Testis (tissue), 5 donors: ENCODE measurements at regions of chr5 and their contacts with region 1.

Region 1: DNA sequence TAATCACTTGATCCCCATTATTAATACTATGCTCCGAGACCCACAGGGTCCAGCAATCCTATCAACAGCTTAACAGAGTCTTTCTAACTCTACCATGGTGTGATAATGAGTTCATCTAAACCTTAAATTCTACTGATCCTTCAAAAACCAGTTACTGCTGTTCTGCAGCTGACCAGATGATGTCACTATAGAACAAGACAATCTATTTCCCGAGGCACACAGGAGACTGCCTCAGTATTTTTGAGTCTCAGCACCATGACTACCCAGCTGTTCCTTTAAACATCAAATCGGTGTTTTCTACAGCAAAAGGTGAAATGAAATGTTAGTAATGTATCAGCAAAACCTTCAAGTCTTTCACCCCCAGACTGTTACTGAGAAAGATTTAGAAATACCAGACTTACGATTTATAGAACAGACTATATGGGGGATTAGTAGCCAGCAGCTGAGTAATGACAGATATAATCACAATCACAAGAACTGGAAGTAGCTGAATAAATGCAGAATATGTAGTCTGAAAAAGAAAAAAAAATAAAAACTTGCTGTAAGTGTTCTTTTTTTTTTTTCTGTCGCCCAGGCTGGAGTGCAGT is 16.9 kb downstream of the DNAJC18 start:
- DNase-seq: peak; percentile 69
- H3K4me3 ChIP-seq: no peak overlapping the region
- H3K27ac ChIP-seq: no peak overlapping the region
- H3K4me1 ChIP-seq: no peaks in the 10 kb centered on the region
- H3K27me3 ChIP-seq: no peaks in the 10 kb centered on the region
- CTCF ChIP-seq: peak; percentile 62 to 79 (median 72)
- POLR2A ChIP-seq: no peak

Region 2: GRCh38 chr5:139517683-139518564 is 95.5 kb after region 1 on chr5:
- intact Hi-C with region 1: loop called (anchors 10 kb)
- DNase-seq: peak; percentile 95
- H3K4me3 ChIP-seq: peak overlapping the region; percentile 53 to 58
- H3K27ac ChIP-seq: peak overlapping the region; percentile 63 to 82
- H3K4me1 ChIP-seq: no peaks in the 10 kb centered on the region
- H3K27me3 ChIP-seq: no peaks in the 10 kb centered on the region
- CTCF ChIP-seq: peak; percentile 98
- POLR2A ChIP-seq: no peak